ENCODE measurements at regions of chr2 and their contacts with region 1.

Region 1: GRCh38 chr2:48504647-48505327 is 25.2 kb upstream of the STON1 start:
- DNase-seq: peak in 1 of 4 experiments; percentile 61
- ATAC-seq: peak; percentile 54
- H3K4me3 ChIP-seq: no peak overlapping the region
- H3K27ac ChIP-seq: no peak overlapping the region
- H3K4me1 ChIP-seq: peaks cover 0 to 17% of the 10 kb centered on the region in 2 experiments; a peak in 4 of 5 replicates
- H3K27me3 ChIP-seq: no peaks in the 10 kb centered on the region
- CTCF ChIP-seq: no peak
- EP300 ChIP-seq: no peak; the same call in 1 of the 2 replicates
- POLR2A ChIP-seq: no peak
- RAD21 ChIP-seq: no peak

Region 2: GRCh38 chr2:48433682-48434081 is 71.1 kb before region 1 on chr2:
- CTCF ChIA-PET with region 1: no interaction called
- POLR2A ChIA-PET with region 1: no interaction called
- in situ Hi-C with region 1: no loop called
- intact Hi-C with region 1: no loop called
- DNase-seq: peak in 1 of 4 experiments; percentile 30
- ATAC-seq: peak; percentile 70
- H3K4me3 ChIP-seq: no peak overlapping the region
- H3K27ac ChIP-seq: 0 out of 3 replicates have a peak overlapping the region, but pooled peaks have one; percentile 32
- H3K4me1 ChIP-seq: peaks cover 0 to 11% of the 10 kb centered on the region in 2 experiments; a peak in 2 of 5 replicates
- H3K27me3 ChIP-seq: no peaks in the 10 kb centered on the region
- CTCF ChIP-seq: peak in 1 of 3 experiments; percentile 3; a peak in 1 of 6 replicates
- EP300 ChIP-seq: no peak
- POLR2A ChIP-seq: no peak
- RAD21 ChIP-seq: no peak

Region 3: GRCh38 chr2:48454504-48454903 is 50.3 kb before region 1 on chr2:
- CTCF ChIA-PET with region 1: no interaction called
- POLR2A ChIA-PET with region 1: interaction called, 3 read pairs
- in situ Hi-C with region 1: no loop called
- intact Hi-C with region 1: loop called (anchors 5 kb)
- DNase-seq: no peak
- ATAC-seq: no peak
- H3K4me3 ChIP-seq: no peak overlapping the region
- H3K27ac ChIP-seq: no peak overlapping the region
- H3K4me1 ChIP-seq: peaks cover 0 to 16% of the 10 kb centered on the region in 2 experiments; a peak in 3 of 5 replicates
- H3K27me3 ChIP-seq: no peaks in the 10 kb centered on the region
- CTCF ChIP-seq: no peak
- EP300 ChIP-seq: no peak
- POLR2A ChIP-seq: no peak
- RAD21 ChIP-seq: no peak

Measured in K562 (cell line).